Thyroid gland (tissue), 4 donors: ENCODE measurements at regions of chr2 and their contacts with region 1.

Region 1: DNA sequence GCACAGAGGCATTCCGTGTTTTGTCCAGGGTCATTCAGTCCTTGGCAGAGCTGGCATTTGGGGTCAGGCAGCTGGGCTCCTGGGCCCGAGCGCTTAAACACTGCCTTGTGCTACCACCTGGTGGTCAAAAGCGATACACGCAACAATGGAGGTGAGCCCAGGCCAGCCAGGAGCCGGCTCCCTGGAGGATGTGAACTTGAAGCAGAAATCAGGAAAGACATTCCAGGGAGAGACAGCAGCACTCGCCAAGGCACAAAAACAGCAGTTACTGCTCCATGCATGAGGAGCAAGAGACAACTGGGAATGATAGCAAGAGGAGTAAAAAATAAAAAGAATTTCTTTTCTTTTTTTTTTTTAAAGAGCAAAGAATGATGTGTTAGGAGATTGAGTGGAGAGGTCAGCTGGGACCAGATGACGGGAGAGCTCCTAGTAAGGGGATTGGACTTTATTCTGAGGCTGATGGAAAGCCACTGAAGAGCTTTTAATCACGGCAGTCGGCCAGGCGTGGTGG is 20.7 kb downstream of the SCYGR8 start:
- DNase-seq: peak; percentile 78 to 82
- H3K4me3 ChIP-seq: no peak overlapping the region
- H3K27ac ChIP-seq: no peak overlapping the region
- H3K4me1 ChIP-seq: peaks cover 0 to 3% of the 10 kb centered on the region in 2 donors
- H3K27me3 ChIP-seq: no peaks in the 10 kb centered on the region
- CTCF ChIP-seq: peak; percentile 61 to 88 (median 78)
- POLR2A ChIP-seq: no peak

Region 2: GRCh38 chr2:227415538-227416424 is 350.6 kb before region 1 on chr2:
- intact Hi-C with region 1: loop called (anchors 10 kb)
- DNase-seq: no peak
- H3K4me3 ChIP-seq: no peak overlapping the region
- H3K27ac ChIP-seq: no peak overlapping the region
- H3K4me1 ChIP-seq: no peaks in the 10 kb centered on the region
- H3K27me3 ChIP-seq: no peaks in the 10 kb centered on the region
- CTCF ChIP-seq: no peak
- POLR2A ChIP-seq: no peak

Region 3: DNA sequence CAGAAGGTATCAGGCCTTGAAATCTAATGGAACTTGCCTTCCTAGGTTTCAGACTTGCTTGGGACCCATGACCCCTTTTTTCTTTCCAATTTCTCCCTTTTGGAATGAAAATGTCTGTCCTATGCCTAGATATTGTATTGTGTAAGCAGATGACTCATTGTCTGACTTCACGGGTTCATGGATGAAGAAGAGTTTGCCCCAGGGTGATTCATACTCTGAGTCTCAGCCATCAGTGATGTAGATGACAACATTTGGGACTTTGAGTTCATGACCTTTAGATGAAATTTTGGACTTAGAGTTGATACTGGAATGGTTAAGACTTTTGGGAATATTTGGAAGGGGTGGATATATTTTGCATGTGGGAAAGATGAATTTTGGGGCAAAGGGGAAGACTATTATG is 111.0 kb before region 1 on chr2:
- intact Hi-C with region 1: loop called (anchors 5 kb)
- DNase-seq: no peak
- H3K4me3 ChIP-seq: no peak overlapping the region
- H3K27ac ChIP-seq: no peak overlapping the region
- H3K4me1 ChIP-seq: no peaks in the 10 kb centered on the region
- H3K27me3 ChIP-seq: no peaks in the 10 kb centered on the region
- CTCF ChIP-seq: no peak
- POLR2A ChIP-seq: no peak